GM12878 (cell line): ENCODE measurements at regions of chr3 and their contacts with region 1.

Region 1: DNA sequence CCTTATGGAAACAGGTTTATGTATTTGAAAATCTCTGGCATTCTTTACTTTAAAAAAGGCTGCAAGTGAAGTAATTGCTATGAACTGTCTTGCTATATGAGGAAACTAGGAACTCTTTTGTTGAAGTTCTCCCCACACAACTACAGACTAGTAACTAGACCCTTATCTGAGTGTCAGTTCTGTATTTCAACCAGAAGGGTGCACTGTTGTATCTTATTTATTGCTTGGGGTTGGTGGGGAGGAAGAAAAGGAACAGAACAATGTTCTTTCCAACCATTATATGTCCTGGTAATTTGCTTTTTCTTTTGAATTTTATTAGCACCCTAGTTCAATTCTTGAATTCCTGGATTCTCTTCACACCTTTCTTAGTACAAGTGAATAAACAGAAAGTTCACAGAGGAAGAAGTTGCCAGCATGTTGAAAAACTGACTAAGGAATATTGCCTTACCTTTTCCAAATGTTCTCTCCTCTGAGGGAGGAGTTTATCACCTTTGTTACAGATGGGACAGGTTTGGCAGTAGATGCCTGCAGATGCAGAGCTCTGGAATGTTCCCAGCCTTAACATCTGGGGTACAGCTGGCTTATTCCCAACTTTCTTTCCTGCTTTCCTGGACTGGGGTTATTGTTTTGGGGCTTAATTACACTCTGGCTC is 162.4 kb upstream of the CFAP20DC start:
- DNase-seq: peak; percentile 19
- ATAC-seq: peak; percentile 97
- H3K4me3 ChIP-seq: no peak overlapping the region
- H3K27ac ChIP-seq: no peak overlapping the region
- H3K4me1 ChIP-seq: no peaks in the 10 kb centered on the region
- H3K27me3 ChIP-seq: no peaks in the 10 kb centered on the region
- CTCF ChIP-seq: peak; percentile 52 to 73 (median 66)
- EP300 ChIP-seq: no peak
- POLR2A ChIP-seq: no peak
- RAD21 ChIP-seq: peak; percentile 92

Region 2: DNA sequence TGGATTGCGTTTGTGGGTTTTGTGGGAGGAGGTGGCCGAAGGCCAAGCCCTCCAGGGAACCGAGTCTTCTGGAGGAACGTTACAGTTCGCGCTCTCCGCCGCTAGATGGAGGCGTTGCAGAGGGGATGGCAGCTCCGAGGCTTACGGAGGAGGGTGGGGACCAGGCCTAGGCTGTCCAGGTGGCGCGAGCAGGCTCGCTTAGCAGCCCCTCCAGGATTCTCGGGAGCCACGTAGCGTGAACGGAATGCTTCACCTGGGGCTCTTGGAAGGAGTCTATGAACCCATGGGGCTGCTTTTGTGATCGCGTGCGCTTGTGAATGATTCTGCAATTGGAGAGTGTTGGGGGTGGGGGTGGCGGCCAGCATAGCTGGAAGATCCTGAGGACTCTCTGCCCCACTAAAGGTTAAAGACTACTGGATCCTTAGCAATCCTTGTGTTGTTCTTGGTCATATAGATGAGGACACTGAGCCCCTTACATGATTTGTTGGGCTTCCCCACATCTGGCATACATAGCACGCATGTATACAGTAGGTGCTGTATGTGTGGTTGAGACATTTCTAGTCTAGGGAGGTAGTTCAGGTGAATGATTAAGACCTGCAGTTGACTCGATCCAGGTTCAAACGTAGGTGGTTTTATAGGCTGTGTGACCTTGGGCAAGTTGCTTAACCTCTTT is 571.4 kb before region 1 on chr3:
- CTCF ChIA-PET with region 1: interaction called, 3 read pairs
- POLR2A ChIA-PET with region 1: no interaction called
- RAD21 ChIA-PET with region 1: no interaction called
- SMC1A ChIA-PET with region 1: no interaction called
- in situ Hi-C with region 1: no loop called
- intact Hi-C with region 1: loop called (anchors 1 kb)
- DNase-seq: no peak
- ATAC-seq: peak; percentile 97
- H3K4me3 ChIP-seq: no peak overlapping the region
- H3K27ac ChIP-seq: no peak overlapping the region
- H3K4me1 ChIP-seq: no peaks in the 10 kb centered on the region
- H3K27me3 ChIP-seq: no peaks in the 10 kb centered on the region
- CTCF ChIP-seq: peak; percentile 82 to 97 (median 94); a peak in 5 of 6 replicates
- EP300 ChIP-seq: no peak
- POLR2A ChIP-seq: no peak
- RAD21 ChIP-seq: peak; percentile 94

Region 3: DNA sequence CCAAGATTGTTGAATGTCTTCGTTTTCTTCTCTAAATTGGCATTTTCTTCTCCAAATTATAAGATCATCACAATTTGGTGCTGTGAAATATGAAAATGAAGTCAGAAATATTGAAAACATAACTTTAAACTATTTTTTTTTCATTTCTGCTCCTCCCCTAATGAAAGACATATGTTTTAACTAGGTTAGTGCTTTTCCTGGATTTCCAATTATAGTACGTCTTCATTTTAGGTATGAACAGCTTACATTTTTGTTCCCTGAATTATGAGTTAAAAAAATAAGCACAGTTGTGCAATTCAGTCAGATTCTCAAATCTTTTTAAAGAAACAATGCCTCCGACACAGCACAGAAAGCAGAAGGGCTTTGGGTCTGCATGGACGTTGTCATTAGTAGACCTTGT is 78.9 kb before region 1 on chr3:
- CTCF ChIA-PET with region 1: no interaction called
- POLR2A ChIA-PET with region 1: no interaction called
- RAD21 ChIA-PET with region 1: no interaction called
- SMC1A ChIA-PET with region 1: no interaction called
- in situ Hi-C with region 1: no loop called
- intact Hi-C with region 1: no loop called
- DNase-seq: no peak
- ATAC-seq: no peak
- H3K4me3 ChIP-seq: no peak overlapping the region
- H3K27ac ChIP-seq: no peak overlapping the region
- H3K4me1 ChIP-seq: no peaks in the 10 kb centered on the region
- H3K27me3 ChIP-seq: no peaks in the 10 kb centered on the region
- CTCF ChIP-seq: no peak
- EP300 ChIP-seq: no peak
- POLR2A ChIP-seq: no peak
- RAD21 ChIP-seq: no peak

Region 4: DNA sequence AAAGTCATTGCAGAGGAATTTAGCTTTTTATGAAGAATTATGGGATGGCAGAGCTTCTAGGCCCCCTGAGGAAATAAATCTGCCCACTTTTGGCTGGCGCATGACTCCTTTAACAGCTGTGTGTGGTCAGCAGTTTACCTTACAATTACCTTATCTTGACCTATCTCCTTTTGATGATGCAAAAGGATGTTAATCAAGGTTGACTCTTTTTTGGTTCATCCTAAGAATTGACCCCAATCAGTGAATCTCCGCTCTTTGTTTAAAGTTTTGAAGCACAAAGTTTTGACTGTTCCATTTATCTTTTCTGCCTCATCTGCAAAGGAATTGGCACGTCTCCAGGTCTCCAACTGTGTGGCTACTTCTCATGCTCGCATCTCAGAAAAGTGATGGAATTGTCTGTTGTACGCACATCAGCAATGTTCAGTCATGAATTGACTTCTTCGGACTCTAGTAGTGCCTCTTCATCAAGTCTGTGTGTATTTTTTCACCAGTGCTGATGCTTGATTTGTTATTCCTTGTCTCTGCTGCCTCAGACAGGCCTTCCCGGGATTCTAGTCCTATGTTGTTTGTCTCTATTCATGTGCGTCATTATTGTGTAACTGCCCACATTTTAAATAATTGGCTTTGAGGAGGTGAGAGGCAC is 33.7 kb after region 1 on chr3:
- CTCF ChIA-PET with region 1: interaction called, 34 read pairs
- POLR2A ChIA-PET with region 1: no interaction called
- RAD21 ChIA-PET with region 1: interaction called, 33 read pairs
- SMC1A ChIA-PET with region 1: interaction called, 25 read pairs
- in situ Hi-C with region 1: no loop called
- intact Hi-C with region 1: loop called (anchors 2 kb)
- DNase-seq: no peak
- ATAC-seq: no peak
- H3K4me3 ChIP-seq: no peak overlapping the region
- H3K27ac ChIP-seq: peak overlapping the region; percentile 25; the same call in 1 of the 2 replicates
- H3K4me1 ChIP-seq: peaks cover 18% of the 10 kb centered on the region
- H3K27me3 ChIP-seq: no peaks in the 10 kb centered on the region
- CTCF ChIP-seq: no peak
- EP300 ChIP-seq: no peak
- POLR2A ChIP-seq: no peak
- RAD21 ChIP-seq: no peak

Region 5: DNA sequence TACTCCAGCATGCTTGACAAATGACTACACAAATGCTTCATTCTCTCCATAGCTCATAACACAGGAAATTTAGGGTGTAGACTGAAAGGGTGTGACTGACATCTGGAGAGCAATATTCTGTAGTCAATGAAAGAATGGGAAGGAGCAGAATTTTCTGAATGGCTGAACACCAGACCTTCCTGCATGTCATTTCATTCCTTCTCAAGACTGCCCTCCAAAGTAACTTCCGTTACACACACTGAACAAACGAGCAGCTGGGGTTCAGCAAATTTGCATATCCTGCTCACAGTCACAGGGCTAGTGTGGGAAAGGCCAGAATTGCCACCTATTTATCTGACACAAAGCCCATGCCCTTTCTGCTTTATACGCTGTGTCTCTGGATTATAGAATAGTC is 162.6 kb after region 1 on chr3:
- CTCF ChIA-PET with region 1: interaction called, 6 read pairs
- POLR2A ChIA-PET with region 1: no interaction called
- RAD21 ChIA-PET with region 1: interaction called, 3 read pairs
- SMC1A ChIA-PET with region 1: interaction called, 8 read pairs
- in situ Hi-C with region 1: no loop called
- intact Hi-C with region 1: loop called (anchors 1 kb)
- DNase-seq: peak; percentile 91
- ATAC-seq: peak; percentile 99
- H3K4me3 ChIP-seq: no peak overlapping the region
- H3K27ac ChIP-seq: no peak overlapping the region
- H3K4me1 ChIP-seq: peaks cover 9% of the 10 kb centered on the region
- H3K27me3 ChIP-seq: no peaks in the 10 kb centered on the region
- CTCF ChIP-seq: no peak; a peak in 1 of 6 replicates
- EP300 ChIP-seq: 0 out of 4 replicates have a peak, but pooled peaks of 1 of the 2 experiments have one; percentile 57
- POLR2A ChIP-seq: no peak
- RAD21 ChIP-seq: peak; percentile 31; the same call in 1 of the 2 replicates

Region 6: GRCh38 chr3:59450946-59451763 is 238.9 kb after region 1 on chr3:
- CTCF ChIA-PET with region 1: interaction called, 3 read pairs
- POLR2A ChIA-PET with region 1: no interaction called
- RAD21 ChIA-PET with region 1: interaction called, 4 read pairs
- SMC1A ChIA-PET with region 1: interaction called, 7 read pairs
- in situ Hi-C with region 1: no loop called
- intact Hi-C with region 1: loop called (anchors 2 kb)
- DNase-seq: peak; percentile 97
- ATAC-seq: peak; percentile 93
- H3K4me3 ChIP-seq: peak overlapping the region; percentile 41; the same call in 1 of the 2 replicates
- H3K27ac ChIP-seq: peak overlapping the region; percentile 87
- H3K4me1 ChIP-seq: peaks cover 34% of the 10 kb centered on the region
- H3K27me3 ChIP-seq: no peaks in the 10 kb centered on the region
- CTCF ChIP-seq: no peak
- EP300 ChIP-seq: peak; percentile 85 to 95; a peak in 3 of 4 replicates
- POLR2A ChIP-seq: peak; percentile 40; the same call in 1 of the 2 replicates
- RAD21 ChIP-seq: peak; percentile 16; the same call in 1 of the 2 replicates

Region 7: DNA sequence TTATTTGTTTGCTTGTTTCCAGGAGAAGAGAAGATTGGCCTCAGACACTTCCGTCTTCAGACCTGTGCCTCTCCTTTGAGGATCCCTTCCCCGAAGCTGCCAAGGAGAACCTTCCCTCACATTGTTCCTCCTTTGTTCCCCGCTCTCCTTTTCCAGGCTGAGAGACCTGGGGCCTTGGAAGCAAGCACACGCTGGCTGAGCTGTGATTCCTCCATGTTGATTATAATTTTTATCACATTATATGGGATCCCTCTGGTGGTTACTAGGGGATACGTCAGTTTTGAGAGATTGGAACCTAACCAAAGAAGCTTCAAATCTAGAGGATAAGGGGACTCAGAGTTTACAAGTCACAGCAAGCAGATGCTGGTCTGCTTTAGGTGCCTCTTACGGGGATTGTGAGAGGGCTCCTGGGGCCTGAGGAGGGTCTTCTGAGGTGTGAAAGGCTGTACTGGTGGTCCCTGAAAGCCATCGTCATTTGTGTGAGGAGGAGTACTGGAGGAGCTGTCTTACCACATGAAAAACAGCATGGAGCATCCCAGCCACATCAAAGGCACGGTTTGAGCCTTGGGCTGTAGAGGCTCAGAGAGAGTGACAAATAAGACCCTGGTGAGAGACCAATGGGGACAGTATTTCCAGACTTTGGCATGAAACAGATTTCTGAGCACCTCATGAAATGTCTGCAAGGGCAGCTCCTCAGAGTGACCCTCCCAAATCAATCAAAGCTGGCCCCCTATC is 597.6 kb after region 1 on chr3:
- CTCF ChIA-PET with region 1: interaction called, 10 read pairs
- POLR2A ChIA-PET with region 1: no interaction called
- RAD21 ChIA-PET with region 1: interaction called, 18 read pairs
- SMC1A ChIA-PET with region 1: interaction called, 27 read pairs
- in situ Hi-C with region 1: no loop called
- intact Hi-C with region 1: no loop called
- DNase-seq: no peak
- ATAC-seq: peak; percentile 49
- H3K4me3 ChIP-seq: no peak overlapping the region
- H3K27ac ChIP-seq: no peak overlapping the region
- H3K4me1 ChIP-seq: no peaks in the 10 kb centered on the region
- H3K27me3 ChIP-seq: no peaks in the 10 kb centered on the region
- CTCF ChIP-seq: peak in 2 of 3 experiments; percentile 10 to 34; a peak in 2 of 6 replicates
- EP300 ChIP-seq: no peak
- POLR2A ChIP-seq: no peak
- RAD21 ChIP-seq: peak; percentile 44